ENCODE measurements at regions of chr6 and their contacts with region 1.

Region 1: DNA sequence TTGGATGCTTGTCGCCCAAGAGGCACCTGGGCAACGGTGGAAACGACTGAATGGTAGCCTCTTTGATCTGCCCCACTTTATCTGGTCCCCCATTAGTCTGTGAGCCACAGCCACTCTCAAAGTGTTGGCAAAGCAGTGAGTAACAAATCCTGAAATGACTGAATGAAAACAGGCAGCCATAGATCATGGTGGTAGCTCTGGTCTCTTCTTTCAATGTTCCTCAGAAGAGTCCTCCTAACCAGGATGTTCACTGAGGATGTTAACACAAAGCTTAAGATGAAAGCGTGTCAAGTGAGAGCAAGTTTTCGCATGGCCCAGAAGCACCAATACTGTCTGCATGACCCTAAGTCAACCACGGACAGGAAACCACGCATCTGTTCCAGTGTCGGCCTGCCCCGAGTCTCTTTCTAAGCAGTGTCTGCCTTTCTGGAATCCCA is 107.3 kb downstream of the IRF4 start:
- DNase-seq: peak; percentile 88
- H3K4me3 Mint-ChIP-seq: peak overlapping the region; percentile 78
- H3K27ac Mint-ChIP-seq: peak overlapping the region; percentile 92
- H3K4me1 Mint-ChIP-seq: peaks cover 73% of the 10 kb centered on the region
- H3K27me3 Mint-ChIP-seq: no peaks in the 10 kb centered on the region

Region 2: GRCh38 chr6:399785-400534 is 98.9 kb before region 1 on chr6:
- intact Hi-C with region 1: no loop called
- DNase-seq: peak; percentile 87
- H3K4me3 Mint-ChIP-seq: peak overlapping the region; percentile 80
- H3K27ac Mint-ChIP-seq: peak overlapping the region; percentile 87
- H3K4me1 Mint-ChIP-seq: peaks cover 88% of the 10 kb centered on the region
- H3K27me3 Mint-ChIP-seq: no peaks in the 10 kb centered on the region

Region 3: DNA sequence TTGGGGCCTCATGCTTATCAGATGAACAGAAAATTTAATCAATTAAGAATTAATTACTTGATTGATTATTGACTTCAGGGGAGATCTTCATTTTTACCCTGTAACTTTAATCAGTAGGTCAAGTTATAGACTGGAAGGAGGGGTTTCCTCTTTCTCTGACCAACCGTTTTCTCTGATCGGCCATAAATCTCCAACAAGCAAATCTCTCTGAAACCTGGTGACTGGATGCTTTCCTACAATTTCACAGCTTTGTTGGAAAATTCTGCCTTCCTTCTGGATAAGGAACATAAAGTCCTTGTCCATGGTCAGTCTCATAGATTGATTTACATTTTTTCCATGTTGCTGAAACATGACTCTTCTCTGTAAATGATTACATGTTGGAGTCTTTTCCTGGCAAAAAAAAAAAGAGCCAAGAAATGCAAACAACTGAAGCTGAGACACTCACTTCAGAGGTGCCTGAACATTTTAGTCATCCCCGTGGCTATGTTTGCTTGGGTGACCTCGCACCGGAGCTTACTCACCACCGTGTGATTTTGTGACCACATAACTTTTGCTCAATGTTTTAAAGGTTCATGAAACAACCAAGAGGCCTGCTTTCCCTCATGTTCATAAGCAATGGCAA is 76.3 kb before region 1 on chr6:
- intact Hi-C with region 1: loop called (anchors 1 kb)
- DNase-seq: peak; percentile 88
- H3K4me3 Mint-ChIP-seq: no peak overlapping the region
- H3K27ac Mint-ChIP-seq: peak overlapping the region; percentile 91
- H3K4me1 Mint-ChIP-seq: peaks cover 30% of the 10 kb centered on the region
- H3K27me3 Mint-ChIP-seq: no peaks in the 10 kb centered on the region

Region 4: GRCh38 chr6:431986-432385 is 66.8 kb before region 1 on chr6:
- intact Hi-C with region 1: loop called (anchors 1 kb)
- DNase-seq: peak; percentile 90
- H3K4me3 Mint-ChIP-seq: peak overlapping the region; percentile 14
- H3K27ac Mint-ChIP-seq: peak overlapping the region; percentile 67
- H3K4me1 Mint-ChIP-seq: peaks cover 72% of the 10 kb centered on the region
- H3K27me3 Mint-ChIP-seq: no peaks in the 10 kb centered on the region

Region 5: GRCh38 chr6:484086-484745 is 14.6 kb before region 1 on chr6:
- intact Hi-C with region 1: loop called (anchors 1 kb)
- DNase-seq: peak; percentile 67
- H3K4me3 Mint-ChIP-seq: peak overlapping the region; percentile 51
- H3K27ac Mint-ChIP-seq: peak overlapping the region; percentile 98
- H3K4me1 Mint-ChIP-seq: peaks cover 67% of the 10 kb centered on the region
- H3K27me3 Mint-ChIP-seq: no peaks in the 10 kb centered on the region

Region 6: DNA sequence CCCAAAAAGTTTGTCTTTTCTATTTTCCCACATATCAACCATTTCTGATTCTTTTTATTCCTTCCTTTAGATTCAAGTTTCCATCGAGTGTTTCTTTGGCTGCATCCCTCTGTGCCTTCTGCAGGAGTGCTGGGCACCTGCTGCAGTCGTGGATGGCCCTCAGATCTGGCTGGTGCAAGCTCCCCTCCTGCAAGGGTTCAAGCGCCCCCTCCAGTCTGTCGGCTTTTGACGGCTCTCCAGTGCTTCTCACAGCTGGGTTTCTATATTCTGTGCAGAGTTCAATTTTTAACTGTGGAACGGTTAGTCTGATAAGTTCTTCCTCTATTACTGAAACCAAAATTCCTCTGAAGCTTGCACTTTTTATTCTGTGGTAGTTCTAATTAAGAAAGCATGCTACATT is 26.0 kb after region 1 on chr6:
- intact Hi-C with region 1: no loop called
- DNase-seq: peak; percentile 76
- H3K4me3 Mint-ChIP-seq: no peak overlapping the region
- H3K27ac Mint-ChIP-seq: peak overlapping the region; percentile 71
- H3K4me1 Mint-ChIP-seq: peaks cover 18% of the 10 kb centered on the region
- H3K27me3 Mint-ChIP-seq: no peaks in the 10 kb centered on the region

Region 7: DNA sequence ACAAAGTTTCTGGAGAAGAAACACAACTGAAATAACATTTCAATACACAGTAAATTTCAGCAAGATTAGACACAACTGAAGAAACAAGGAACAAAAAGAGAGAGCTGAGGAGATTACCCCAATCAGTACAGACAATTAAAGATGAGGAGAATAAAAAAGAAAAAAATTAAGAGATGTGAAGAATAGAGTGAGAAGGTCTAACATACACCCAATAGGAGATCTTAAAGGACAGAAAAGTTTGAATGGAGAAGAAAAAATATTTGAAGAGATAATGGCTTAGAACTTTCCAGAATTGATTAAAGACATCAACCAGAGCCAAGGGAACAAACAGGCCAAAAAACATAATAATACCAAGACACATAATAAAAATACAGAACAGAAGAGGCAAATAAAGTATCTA is 41.7 kb after region 1 on chr6:
- intact Hi-C with region 1: no loop called
- DNase-seq: no peak
- H3K4me3 Mint-ChIP-seq: no peak overlapping the region
- H3K27ac Mint-ChIP-seq: no peak overlapping the region
- H3K4me1 Mint-ChIP-seq: peaks cover 13% of the 10 kb centered on the region
- H3K27me3 Mint-ChIP-seq: no peaks in the 10 kb centered on the region

Region 8: GRCh38 chr6:815348-815738 is 316.5 kb after region 1 on chr6:
- intact Hi-C with region 1: no loop called
- DNase-seq: no peak
- H3K4me3 Mint-ChIP-seq: no peak overlapping the region
- H3K27ac Mint-ChIP-seq: no peak overlapping the region
- H3K4me1 Mint-ChIP-seq: peaks cover 18% of the 10 kb centered on the region
- H3K27me3 Mint-ChIP-seq: peaks cover 6% of the 10 kb centered on the region

Measured in activated CD4-positive, alpha-beta T cell treated with anti-CD3 and anti-CD28 coated beads, Interleukin-2, amount 10 ng/mL, durations not matched to agents 24 days and 14 days (primary cell).